ENCODE measurements at regions of chr6 and their contacts with region 1.

Region 1: GRCh38 chr6:109382576-109383437 is 540 bp upstream of the CD164 start:
- DNase-seq: peak; percentile 82 to 93
- H3K4me3 ChIP-seq: peak overlapping the region; percentile 84
- H3K4me1 ChIP-seq: peaks cover 15% of the 10 kb centered on the region
- H3K27me3 ChIP-seq: no peaks in the 10 kb centered on the region

Region 2: DNA sequence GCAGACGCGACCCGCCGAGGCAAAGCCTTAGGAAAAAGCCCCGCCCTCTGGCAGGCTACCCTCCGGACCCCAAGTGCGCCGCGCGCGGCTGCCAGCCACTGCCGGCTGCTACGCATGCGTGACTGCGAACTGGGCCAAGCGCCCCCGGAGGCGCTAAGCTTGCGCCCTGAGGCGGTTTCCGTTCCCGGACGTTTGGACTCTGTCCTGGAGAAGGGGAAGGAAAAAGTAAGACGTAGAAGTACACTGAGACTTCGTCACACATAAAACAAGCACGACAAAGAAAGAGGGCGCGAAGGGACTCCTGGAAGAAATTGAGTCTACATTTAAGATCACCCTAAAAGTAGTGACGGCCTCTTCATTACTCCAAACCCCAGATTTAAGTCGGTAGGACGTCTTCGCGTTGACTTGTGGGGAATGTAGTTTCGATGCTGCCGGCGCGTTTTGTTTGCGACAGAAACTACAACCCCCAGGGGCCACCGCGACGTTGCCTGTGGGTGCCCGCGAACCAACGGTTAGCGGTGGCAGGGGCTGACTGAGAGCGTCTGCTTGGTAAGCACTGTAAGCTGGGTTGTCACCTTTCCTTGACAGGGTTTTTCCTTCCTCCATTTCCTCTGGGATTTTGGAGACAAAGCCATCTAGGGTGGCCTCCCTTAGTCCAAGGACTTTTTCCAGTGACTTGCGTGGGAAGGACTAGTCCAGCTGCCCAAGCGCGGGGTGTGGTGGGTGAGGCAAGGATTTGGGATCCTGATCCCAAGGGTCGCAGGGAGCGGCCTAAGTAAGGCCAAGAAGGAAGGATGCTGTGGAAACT is 287.6 kb before region 1 on chr6 and contains the start of gene CEP57L1:
- in situ Hi-C with region 1: loop called (anchors 10 kb)
- DNase-seq: peak; percentile 93 to 99
- H3K4me3 ChIP-seq: peak within 1 kb of the TSS; percentile 54
- H3K4me1 ChIP-seq: peaks cover 13% of the 10 kb centered on the region; the same call in 1 of the 2 replicates
- H3K27me3 ChIP-seq: no peaks in the 10 kb centered on the region

Region 3: GRCh38 chr6:109187399-109188114 is 195.2 kb before region 1 on chr6:
- in situ Hi-C with region 1: loop called (anchors 5 kb)
- DNase-seq: peak in 1 of 2 experiments; percentile 59
- H3K4me3 ChIP-seq: no peak overlapping the region
- H3K4me1 ChIP-seq: no peaks in the 10 kb centered on the region
- H3K27me3 ChIP-seq: peaks cover 16% of the 10 kb centered on the region

Region 4: GRCh38 chr6:109290143-109290931 is 92.5 kb before region 1 on chr6:
- in situ Hi-C with region 1: no loop called
- DNase-seq: no peak
- H3K4me3 ChIP-seq: no peak overlapping the region
- H3K4me1 ChIP-seq: no peaks in the 10 kb centered on the region
- H3K27me3 ChIP-seq: peaks cover 16% of the 10 kb centered on the region